ENCODE measurements at regions of chr2 and their contacts with region 1.

Region 1: GRCh38 chr2:11404376-11405073 is 60.1 kb upstream of the ROCK2 start:
- DNase-seq: no peak
- H3K4me3 ChIP-seq: no peak overlapping the region
- H3K27ac ChIP-seq: no peak overlapping the region
- H3K4me1 ChIP-seq: no peaks in the 10 kb centered on the region
- H3K27me3 ChIP-seq: no peaks in the 10 kb centered on the region
- CTCF ChIP-seq: no peak

Region 2: DNA sequence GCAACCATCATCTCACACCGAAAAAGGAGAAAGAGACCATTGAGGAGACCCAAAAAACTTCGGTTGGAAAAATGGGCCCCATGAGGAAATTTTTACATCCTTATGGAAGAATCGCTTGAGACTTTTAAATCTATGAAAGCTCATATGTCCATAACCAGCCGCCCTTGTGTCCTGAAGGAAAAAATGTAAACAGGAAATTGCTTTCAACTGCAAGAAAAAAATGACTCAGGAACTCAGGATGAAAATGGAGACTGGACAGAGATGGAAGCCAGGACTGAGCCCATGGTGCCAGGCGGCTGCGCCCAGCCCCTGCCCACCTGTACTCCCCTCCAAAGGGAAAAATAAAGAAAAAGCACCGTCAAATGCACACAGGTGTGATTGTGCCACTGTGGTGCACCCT is 330.7 kb before region 1 on chr2:
- CTCF ChIA-PET with region 1: interaction called, 10 read pairs
- POLR2A ChIA-PET with region 1: no interaction called
- intact Hi-C with region 1: no loop called
- DNase-seq: no peak
- H3K4me3 ChIP-seq: no peak overlapping the region
- H3K27ac ChIP-seq: no peak overlapping the region
- H3K4me1 ChIP-seq: peaks cover 13% of the 10 kb centered on the region
- H3K27me3 ChIP-seq: no peaks in the 10 kb centered on the region
- CTCF ChIP-seq: no peak

Region 3: DNA sequence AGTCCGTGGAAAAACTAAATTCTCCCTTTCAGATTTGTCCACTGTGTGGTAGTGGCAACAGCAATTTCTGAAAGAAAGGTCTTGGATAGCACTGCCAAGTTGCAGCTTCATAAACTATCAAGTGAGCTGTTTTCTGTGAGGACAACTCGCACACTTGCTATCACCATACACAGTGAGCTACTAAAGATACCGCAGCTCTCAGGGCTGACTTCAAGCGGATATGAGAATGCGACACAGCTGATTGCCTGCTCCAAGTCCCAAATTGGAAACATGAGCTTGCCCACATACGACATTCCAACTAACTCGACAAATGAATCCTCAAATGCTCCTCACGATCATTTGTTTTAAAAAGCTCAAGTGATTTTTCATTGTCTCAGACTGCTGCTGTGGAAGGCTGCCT is 15.3 kb after region 1 on chr2:
- CTCF ChIA-PET with region 1: interaction called, 11 read pairs
- POLR2A ChIA-PET with region 1: no interaction called
- intact Hi-C with region 1: no loop called
- DNase-seq: no peak
- H3K4me3 ChIP-seq: no peak overlapping the region
- H3K27ac ChIP-seq: no peak overlapping the region
- H3K4me1 ChIP-seq: no peaks in the 10 kb centered on the region
- H3K27me3 ChIP-seq: no peaks in the 10 kb centered on the region
- CTCF ChIP-seq: no peak

Region 4: GRCh38 chr2:11850082-11850481 is 445.6 kb after region 1 on chr2:
- CTCF ChIA-PET with region 1: no interaction called
- POLR2A ChIA-PET with region 1: no interaction called
- intact Hi-C with region 1: no loop called
- DNase-seq: no peak
- H3K4me3 ChIP-seq: no peak overlapping the region
- H3K27ac ChIP-seq: no peak overlapping the region
- H3K4me1 ChIP-seq: no peaks in the 10 kb centered on the region
- H3K27me3 ChIP-seq: no peaks in the 10 kb centered on the region
- CTCF ChIP-seq: no peak